ENCODE measurements at regions of chr3 and their contacts with region 1.

Region 1: GRCh38 chr3:73848173-73848906 is 223.6 kb upstream of the PDZRN3 start:
- DNase-seq: peak; percentile 51
- ATAC-seq: peak; percentile 72
- H3K4me3 ChIP-seq: no peak overlapping the region
- H3K27ac ChIP-seq: no peak overlapping the region
- H3K4me1 ChIP-seq: no peaks in the 10 kb centered on the region
- H3K27me3 ChIP-seq: peaks cover 11% of the 10 kb centered on the region
- CTCF ChIP-seq: peak; percentile 76
- POLR2A ChIP-seq: no peak
- RAD21 ChIP-seq: peak; percentile 77

Region 2: DNA sequence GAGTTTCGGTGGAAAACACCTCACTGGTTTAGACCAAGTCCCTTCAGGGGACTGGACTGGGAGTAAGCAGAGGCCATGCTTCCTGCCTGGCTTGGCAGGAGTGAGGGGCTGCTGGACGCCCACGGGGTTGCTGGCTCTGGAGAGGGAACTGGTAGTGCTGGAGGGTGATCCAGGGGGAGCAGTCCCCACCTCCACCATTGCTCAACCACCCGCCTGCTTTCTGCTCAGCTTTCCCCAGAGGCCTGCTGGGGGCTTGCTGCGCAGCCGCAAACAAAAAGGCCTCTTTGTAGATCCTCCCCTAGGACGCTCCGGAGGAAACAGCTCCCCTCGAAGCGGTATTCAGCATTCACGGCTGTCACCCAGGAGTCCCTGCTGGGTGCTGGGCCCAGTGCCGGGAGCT is 753.4 kb before region 1 on chr3:
- CTCF ChIA-PET with region 1: no interaction called
- POLR2A ChIA-PET with region 1: no interaction called
- dilution Hi-C with region 1: no loop called
- in situ Hi-C with region 1: loop called (anchors 10 kb)
- intact Hi-C with region 1: loop called (anchors 5 kb)
- DNase-seq: no peak
- ATAC-seq: no peak
- H3K4me3 ChIP-seq: no peak overlapping the region
- H3K27ac ChIP-seq: no peak overlapping the region
- H3K4me1 ChIP-seq: no peaks in the 10 kb centered on the region
- H3K27me3 ChIP-seq: peaks cover 6% of the 10 kb centered on the region; the same call in 1 of the 2 replicates
- CTCF ChIP-seq: no peak
- POLR2A ChIP-seq: no peak
- RAD21 ChIP-seq: no peak

Region 3: DNA sequence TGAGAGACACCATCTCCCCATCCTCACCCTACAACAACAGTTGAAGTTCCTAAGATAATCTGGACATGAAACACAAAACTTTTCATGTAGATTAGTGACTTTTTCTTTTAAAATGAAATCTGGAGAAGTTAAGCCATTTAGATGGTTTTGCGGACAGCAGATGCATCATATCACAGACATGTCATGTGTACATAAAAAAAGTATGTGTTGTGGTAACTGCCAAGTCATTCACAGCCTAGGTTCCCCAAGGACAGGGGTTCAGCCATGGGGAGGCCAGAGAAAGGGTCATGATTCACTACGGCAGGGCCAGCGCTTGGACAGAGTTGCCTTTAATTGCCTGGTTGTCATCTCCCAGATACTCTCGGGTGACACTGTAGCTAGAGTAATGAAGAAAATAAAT is 386.8 kb before region 1 on chr3:
- CTCF ChIA-PET with region 1: no interaction called
- POLR2A ChIA-PET with region 1: no interaction called
- dilution Hi-C with region 1: no loop called
- in situ Hi-C with region 1: no loop called
- intact Hi-C with region 1: loop called (anchors 5 kb)
- DNase-seq: peak; percentile 72
- ATAC-seq: peak; percentile 63
- H3K4me3 ChIP-seq: no peak overlapping the region
- H3K27ac ChIP-seq: peak overlapping the region; percentile 31; the same call in 1 of the 2 replicates
- H3K4me1 ChIP-seq: peaks cover 8% of the 10 kb centered on the region
- H3K27me3 ChIP-seq: no peaks in the 10 kb centered on the region
- CTCF ChIP-seq: no peak
- POLR2A ChIP-seq: no peak
- RAD21 ChIP-seq: no peak

Region 4: DNA sequence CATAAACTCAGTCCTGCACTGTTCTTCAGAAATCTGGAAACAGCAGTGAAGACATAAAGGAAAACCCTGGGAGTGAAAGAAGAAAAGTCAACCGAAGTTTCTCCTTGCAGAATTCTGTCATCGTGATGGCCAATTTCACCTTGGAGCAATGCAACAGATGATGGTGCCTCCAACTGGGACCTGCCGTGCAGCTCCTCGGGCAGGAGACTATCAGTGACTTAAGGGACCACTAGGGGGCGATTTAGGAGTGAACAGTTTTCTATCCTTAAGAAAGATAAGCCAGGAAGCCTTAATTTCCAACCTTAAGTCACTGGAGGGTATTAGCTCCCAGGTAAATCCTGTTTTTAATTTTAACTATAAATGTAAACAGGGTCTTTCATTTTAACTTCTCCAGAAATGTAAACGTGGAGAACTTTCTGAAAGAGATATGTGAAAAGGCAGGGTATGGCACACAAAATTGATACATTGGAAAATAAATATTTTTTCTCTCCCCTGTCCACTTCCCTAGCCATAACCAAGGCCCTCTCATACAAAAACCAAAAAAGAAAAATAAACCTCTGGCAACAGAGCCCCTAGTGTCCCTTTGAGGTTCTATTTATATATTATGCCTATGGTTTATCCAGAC is 339.9 kb before region 1 on chr3:
- CTCF ChIA-PET with region 1: interaction called, 12 read pairs
- POLR2A ChIA-PET with region 1: no interaction called
- dilution Hi-C with region 1: no loop called
- in situ Hi-C with region 1: loop called (anchors 10 kb)
- intact Hi-C with region 1: loop called (anchors 1 kb)
- DNase-seq: peak; percentile 81
- ATAC-seq: peak; percentile 41
- H3K4me3 ChIP-seq: no peak overlapping the region
- H3K27ac ChIP-seq: peak overlapping the region; percentile 45; the same call in 1 of the 2 replicates
- H3K4me1 ChIP-seq: peaks cover 37% of the 10 kb centered on the region
- H3K27me3 ChIP-seq: no peaks in the 10 kb centered on the region
- CTCF ChIP-seq: peak; percentile 73
- POLR2A ChIP-seq: no peak
- RAD21 ChIP-seq: peak; percentile 83

Region 5: GRCh38 chr3:73727117-73727821 is 121.1 kb before region 1 on chr3:
- CTCF ChIA-PET with region 1: no interaction called
- POLR2A ChIA-PET with region 1: no interaction called
- dilution Hi-C with region 1: no loop called
- in situ Hi-C with region 1: no loop called
- intact Hi-C with region 1: loop called (anchors 5 kb)
- DNase-seq: peak; percentile 83
- ATAC-seq: peak; percentile 86
- H3K4me3 ChIP-seq: no peak overlapping the region
- H3K27ac ChIP-seq: peak overlapping the region; percentile 82; the same call in 1 of the 2 replicates
- H3K4me1 ChIP-seq: peaks cover 11% of the 10 kb centered on the region
- H3K27me3 ChIP-seq: no peaks in the 10 kb centered on the region
- CTCF ChIP-seq: no peak
- POLR2A ChIP-seq: no peak
- RAD21 ChIP-seq: no peak

Measured in IMR-90 (cell line).